Heart right ventricle (tissue), 16 donors: ENCODE measurements at regions of chr12 and their contacts with region 1.

Region 1: GRCh38 chr12:29782285-29782870 is 1.4 kb downstream of the TMTC1 start:
- DNase-seq: peak in 1 of 2 donors; percentile 24
- ATAC-seq: peak; percentile 25 to 64 (median 42)
- H3K4me3 ChIP-seq: peak overlapping the region; percentile 48 to 93 (median 82)
- H3K27ac ChIP-seq: peak overlapping the region; percentile 63 to 94 (median 89)
- H3K4me1 ChIP-seq: peaks cover 0 to 45% (median 20%) of the 10 kb centered on the region in 9 donors
- H3K27me3 ChIP-seq: peaks cover 0 to 39% (median 0%) of the 10 kb centered on the region in 7 donors
- CTCF ChIP-seq: no peak

Region 2: DNA sequence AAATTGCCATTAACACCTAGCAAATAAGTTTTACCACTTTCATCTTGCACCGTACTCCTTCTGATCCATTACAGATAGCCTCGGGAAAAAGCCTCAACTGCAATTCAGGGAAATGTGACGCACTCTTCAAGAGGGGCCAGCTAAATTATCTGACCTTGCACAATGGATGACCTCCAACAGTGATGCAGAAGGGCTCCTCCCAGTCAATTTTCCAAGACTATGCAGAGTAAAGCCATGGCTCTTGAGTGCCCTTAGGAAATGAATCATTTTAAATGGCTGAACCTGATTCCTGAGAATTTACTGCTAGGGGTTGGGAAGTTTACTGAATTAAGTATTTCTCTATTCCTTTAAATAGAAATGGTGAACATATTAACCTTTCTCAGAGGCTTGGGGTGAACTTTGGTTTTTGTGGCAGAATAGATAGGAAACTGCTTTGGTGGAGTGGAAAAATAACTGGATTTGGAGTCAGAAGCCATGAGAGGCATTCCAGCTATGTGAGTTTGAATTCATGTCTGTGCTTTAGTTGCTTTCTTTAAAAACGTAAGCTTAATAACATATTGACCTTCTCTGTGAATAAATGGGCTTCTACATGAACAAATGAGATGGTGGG is 220.1 kb before region 1 on chr12:
- intact Hi-C with region 1: loop called in 3 of 10 experiments (anchors 5 to 10 kb)
- DNase-seq: peak in 1 of 2 donors; percentile 75
- ATAC-seq: peak; percentile 80 to 97 (median 94)
- H3K4me3 ChIP-seq: no peak overlapping the region
- H3K27ac ChIP-seq: peak overlapping the region; percentile 16 to 89 (median 76)
- H3K4me1 ChIP-seq: peaks cover 0 to 77% (median 54%) of the 10 kb centered on the region in 9 donors
- H3K27me3 ChIP-seq: no peaks in the 10 kb centered on the region
- CTCF ChIP-seq: no peak

Region 3: GRCh38 chr12:29662734-29663323 is 119.5 kb before region 1 on chr12:
- intact Hi-C with region 1: loop called in 3 of 10 experiments (anchors 5 to 10 kb)
- DNase-seq: no peak
- ATAC-seq: peak in 5 of 8 donors; percentile 27 to 48 (median 37)
- H3K4me3 ChIP-seq: no peak overlapping the region
- H3K27ac ChIP-seq: no peak overlapping the region
- H3K4me1 ChIP-seq: peaks cover 0 to 20% (median 7%) of the 10 kb centered on the region in 9 donors
- H3K27me3 ChIP-seq: no peaks in the 10 kb centered on the region
- CTCF ChIP-seq: no peak

Region 4: DNA sequence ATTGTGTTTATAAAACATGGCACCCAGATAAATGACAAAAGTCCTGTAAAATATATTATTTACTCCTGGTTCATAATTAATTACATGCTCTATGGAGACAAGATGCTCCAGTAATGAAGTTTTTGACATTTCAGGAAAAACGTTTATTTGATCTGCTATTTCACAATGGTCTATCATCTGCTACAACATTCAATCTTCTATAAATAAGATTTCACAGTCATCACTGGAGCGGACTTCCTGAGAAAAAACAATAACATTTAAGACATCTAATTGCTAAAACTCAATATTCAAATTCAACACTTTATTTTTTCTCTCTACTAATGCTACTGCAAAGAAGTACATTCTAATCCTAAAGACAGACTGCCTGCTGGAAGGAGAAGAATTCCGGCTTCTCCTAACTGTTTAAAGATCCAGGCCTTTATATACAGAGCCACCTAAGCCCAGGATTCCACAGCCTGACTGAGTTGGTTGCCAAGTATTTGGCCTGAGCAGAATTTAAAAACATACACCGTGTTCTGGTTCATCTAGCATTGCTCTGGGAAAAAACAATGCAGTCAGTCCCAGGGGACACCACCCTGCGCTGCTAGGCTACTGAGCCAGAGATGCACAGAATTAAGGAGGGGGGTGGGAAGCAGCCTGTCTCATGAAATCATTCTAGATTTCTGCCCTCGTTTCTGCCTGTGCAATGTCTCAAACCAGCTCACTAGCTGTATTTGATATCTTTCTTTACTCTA is 56.6 kb before region 1 on chr12:
- intact Hi-C with region 1: loop called in 2 of 10 experiments (anchors 2 to 5 kb)
- DNase-seq: peak; percentile 68 to 81
- ATAC-seq: peak; percentile 81 to 98 (median 94)
- H3K4me3 ChIP-seq: peak overlapping the region in 3 of 10 donors; percentile 1 to 19 (median 3)
- H3K27ac ChIP-seq: peak overlapping the region; percentile 54 to 85 (median 80)
- H3K4me1 ChIP-seq: peaks cover 6 to 55% (median 48%) of the 10 kb centered on the region in 9 donors
- H3K27me3 ChIP-seq: no peaks in the 10 kb centered on the region
- CTCF ChIP-seq: no peak

Region 5: DNA sequence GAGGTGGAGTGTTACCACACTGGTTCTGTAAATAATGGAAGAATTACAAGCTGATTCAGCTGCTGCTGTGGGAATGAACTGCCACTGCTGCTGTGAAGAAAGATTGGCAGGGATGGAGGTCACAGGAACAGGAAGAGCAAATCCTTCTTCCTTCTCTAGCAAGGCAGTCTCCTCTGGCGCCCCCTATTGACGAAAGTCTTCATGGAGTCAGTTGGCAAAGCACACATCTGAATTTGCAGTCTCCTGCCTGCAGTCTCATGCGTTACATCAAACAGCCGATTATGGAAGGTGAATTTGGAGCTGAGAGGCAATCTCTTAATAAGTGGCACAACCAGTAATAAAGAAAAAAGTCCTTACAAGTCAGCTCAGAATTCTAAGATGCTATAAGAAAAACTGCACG is 107.4 kb after region 1 on chr12:
- intact Hi-C with region 1: loop called in 1 of 10 experiments (anchors 10 kb)
- DNase-seq: peak in 1 of 2 donors; percentile 75
- ATAC-seq: peak in 2 of 8 donors; percentile 41 to 48
- H3K4me3 ChIP-seq: no peak overlapping the region
- H3K27ac ChIP-seq: no peak overlapping the region
- H3K4me1 ChIP-seq: no peaks in the 10 kb centered on the region
- H3K27me3 ChIP-seq: no peaks in the 10 kb centered on the region
- CTCF ChIP-seq: peak; percentile 35 to 72 (median 62)